ENCODE measurements at regions of chr2 and their contacts with region 1.

Region 1: GRCh38 chr2:86097114-86097896 is 8.4 kb downstream of the POLR1A start:
- H3K4me3 Mint-ChIP-seq: no peak overlapping the region
- H3K27ac Mint-ChIP-seq: no peak overlapping the region
- H3K4me1 Mint-ChIP-seq: peaks cover 12% of the 10 kb centered on the region
- H3K27me3 Mint-ChIP-seq: no peaks in the 10 kb centered on the region

Region 2: GRCh38 chr2:85648619-85649018 is 448.7 kb before region 1 on chr2:
- intact Hi-C with region 1: loop called (anchors 10 kb)
- H3K4me3 Mint-ChIP-seq: no peak overlapping the region
- H3K27ac Mint-ChIP-seq: no peak overlapping the region
- H3K4me1 Mint-ChIP-seq: peaks cover 12% of the 10 kb centered on the region
- H3K27me3 Mint-ChIP-seq: no peaks in the 10 kb centered on the region